WTC11 (cell line): ENCODE measurements at regions of chr17 and their contacts with region 1.

Region 1: DNA sequence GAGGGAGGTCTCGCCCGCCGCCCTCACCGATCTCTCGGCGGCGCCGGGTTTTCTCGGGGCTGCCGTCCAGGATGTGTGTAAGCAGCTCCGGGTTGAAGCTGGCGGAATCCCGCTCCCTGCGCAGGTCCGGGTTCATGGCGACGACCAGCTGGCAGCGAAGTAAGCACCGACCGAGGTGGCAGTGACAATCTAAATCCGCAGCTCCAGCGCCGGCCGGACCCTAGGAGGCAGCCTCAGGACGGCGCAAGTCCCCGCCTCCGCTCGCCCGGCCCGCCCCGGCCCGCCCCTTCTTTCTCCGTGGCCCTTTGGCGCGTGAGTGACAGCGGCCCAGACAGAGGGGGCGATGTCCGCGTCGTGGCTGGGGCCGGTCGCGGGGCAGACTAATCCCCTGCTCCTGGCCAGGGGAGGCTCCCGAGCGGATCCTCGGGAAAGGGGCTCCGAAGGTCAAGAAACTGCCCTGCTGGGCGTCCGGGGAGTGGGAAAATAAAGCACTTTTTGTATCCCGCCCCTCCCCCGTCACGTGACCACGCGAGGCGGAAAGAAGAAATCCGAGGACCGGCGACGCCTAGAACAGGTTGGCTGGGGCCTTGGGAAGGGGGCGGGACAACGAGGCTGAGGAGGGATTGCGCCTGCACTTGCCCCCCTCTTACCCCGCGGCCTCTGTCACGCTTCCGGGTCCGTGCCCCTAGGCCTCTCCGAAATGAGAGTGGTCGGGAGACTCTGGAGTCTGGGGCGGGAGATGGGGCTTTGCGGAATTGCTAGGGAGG is at the starts of genes ACOX1 and TEN1:
- DNase-seq: peak; percentile 96
- ATAC-seq: peak; percentile 91
- H3K4me3 Mint-ChIP-seq: peak within 1 kb of the TSS; percentile 97
- H3K27ac Mint-ChIP-seq: peak within 1 kb of the TSS; percentile 100
- H3K4me1 Mint-ChIP-seq: peaks cover 63% of the 10 kb centered on the region
- H3K27me3 Mint-ChIP-seq: no peaks in the 10 kb centered on the region
- CTCF ChIP-seq: no peak
- total RNA-seq, gene ACOX1: 32.4 to 40.9 TPM (median 32.5 TPM) in 3 replicates
- total RNA-seq, gene TEN1: 15.6 to 18.4 TPM (median 17.2 TPM) in 3 replicates

Region 2: DNA sequence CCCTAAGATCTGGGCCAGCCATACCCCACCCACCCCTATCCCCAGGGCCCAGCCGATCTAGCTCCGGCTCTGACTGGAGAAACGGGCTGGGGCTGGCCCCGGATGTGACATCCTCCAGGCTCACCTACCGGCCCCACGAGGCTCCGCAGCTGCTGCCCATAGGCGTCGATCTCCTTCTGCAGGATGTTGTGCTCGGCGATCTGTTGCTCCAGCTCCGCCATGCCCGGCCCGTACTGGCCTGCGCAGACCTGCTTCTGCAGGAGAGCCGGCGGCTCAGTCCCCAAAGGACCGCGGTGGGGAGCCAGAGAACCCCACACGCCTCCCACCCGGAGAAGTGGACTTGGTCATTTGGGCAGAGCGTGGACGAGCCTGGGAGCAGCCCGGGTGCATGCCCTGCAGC is 43.2 kb after region 1 on chr17:
- CTCF ChIA-PET with region 1: no interaction called
- POLR2A ChIA-PET with region 1: no interaction called
- DNase-seq: no peak
- ATAC-seq: no peak
- H3K4me3 Mint-ChIP-seq: no peak overlapping the region
- H3K27ac Mint-ChIP-seq: no peak overlapping the region
- H3K4me1 Mint-ChIP-seq: peaks cover under 1% of the 10 kb centered on the region; the same call in 1 of the 2 replicates
- H3K27me3 Mint-ChIP-seq: no peaks in the 10 kb centered on the region
- CTCF ChIP-seq: no peak

Region 3: GRCh38 chr17:76208120-76208519 is 229.0 kb after region 1 on chr17:
- CTCF ChIA-PET with region 1: no interaction called
- POLR2A ChIA-PET with region 1: interaction called, 11 read pairs
- DNase-seq: no peak
- ATAC-seq: no peak
- H3K4me3 Mint-ChIP-seq: no peak overlapping the region
- H3K27ac Mint-ChIP-seq: no peak overlapping the region
- H3K4me1 Mint-ChIP-seq: peaks cover 9% of the 10 kb centered on the region
- H3K27me3 Mint-ChIP-seq: no peaks in the 10 kb centered on the region
- CTCF ChIP-seq: no peak